CD8-positive, alpha-beta T cell (primary cell): ENCODE measurements at regions of chr9 and their contacts with region 1.

Region 1: DNA sequence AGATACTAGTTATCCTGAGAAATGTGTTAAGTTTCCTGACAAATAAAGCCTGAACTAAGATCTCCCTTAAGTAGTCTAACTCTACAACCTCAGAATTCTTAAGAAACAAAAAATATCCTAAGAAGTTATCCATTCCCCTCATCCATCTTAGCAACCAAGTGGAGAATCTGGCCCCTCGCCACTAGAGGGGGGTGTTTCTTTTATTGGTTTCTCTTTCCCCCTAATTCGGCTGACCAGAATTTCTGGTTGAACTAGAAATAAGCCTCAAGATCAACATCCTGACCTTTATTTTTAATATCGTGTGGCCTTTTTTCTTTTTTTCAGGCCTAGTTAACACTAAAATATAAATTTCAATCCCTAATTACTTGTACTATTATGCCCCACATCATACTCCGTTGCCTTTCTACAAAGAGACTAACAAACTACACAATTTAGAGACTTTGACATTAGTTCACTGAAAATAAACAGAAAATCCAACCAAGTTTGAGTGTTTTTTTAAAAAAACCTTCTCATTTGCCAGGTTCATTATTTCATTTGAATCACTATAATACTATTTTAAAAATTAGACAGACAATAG is 14.3 kb upstream of the NR4A3 start:
- DNase-seq: peak in 8 of 9 experiments; percentile 51 to 85 (median 74)
- ATAC-seq: peak; percentile 84
- H3K4me3 ChIP-seq: no peak overlapping the region
- H3K4me3 Mint-ChIP-seq: no peak overlapping the region
- H3K27ac ChIP-seq: no peak overlapping the region
- H3K27ac Mint-ChIP-seq: no peak overlapping the region
- H3K4me1 ChIP-seq: no peaks in the 10 kb centered on the region
- H3K4me1 Mint-ChIP-seq: peaks cover 13% of the 10 kb centered on the region
- H3K27me3 ChIP-seq: no peaks in the 10 kb centered on the region
- H3K27me3 Mint-ChIP-seq: peaks cover 4% of the 10 kb centered on the region
- CTCF ChIP-seq: peak; percentile 90

Region 2: DNA sequence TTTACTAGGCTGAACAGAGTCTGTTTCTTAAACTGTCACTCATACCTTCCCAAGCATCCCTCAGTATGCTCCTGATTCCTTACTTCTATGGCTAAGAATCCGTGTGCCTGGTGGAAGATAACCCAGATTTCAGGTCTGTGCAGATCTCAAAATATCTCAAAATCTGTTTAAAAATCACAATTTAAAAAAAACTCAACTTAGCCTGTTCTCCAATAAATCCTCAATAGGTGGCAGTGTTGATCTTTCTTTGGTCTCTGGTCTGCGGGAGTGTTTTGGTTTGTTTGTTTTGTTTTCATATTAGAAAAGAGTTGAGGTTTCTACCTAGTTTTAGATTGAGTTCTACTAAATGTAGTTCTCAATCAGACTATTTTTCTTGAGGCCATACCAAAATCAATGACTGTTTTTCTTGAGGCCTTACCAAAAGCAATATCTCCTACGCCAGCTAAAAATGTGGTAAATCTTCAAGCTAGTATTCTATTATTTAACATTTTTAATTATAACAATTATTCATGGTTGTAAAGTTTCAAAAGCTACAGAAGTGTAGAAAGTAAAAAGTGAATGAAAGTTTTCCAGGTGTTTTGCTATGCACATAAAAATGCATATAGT is 644.5 kb before region 1 on chr9:
- CTCF ChIA-PET with region 1: no interaction called
- POLR2A ChIA-PET with region 1: no interaction called
- intact Hi-C with region 1: loop called in 1 of 2 experiments (anchors 5 kb)
- DNase-seq: peak in 2 of 9 experiments; percentile 56 to 71
- ATAC-seq: no peak
- H3K4me3 ChIP-seq: no peak overlapping the region
- H3K4me3 Mint-ChIP-seq: no peak overlapping the region
- H3K27ac ChIP-seq: no peak overlapping the region
- H3K27ac Mint-ChIP-seq: no peak overlapping the region
- H3K4me1 ChIP-seq: peaks cover 14% of the 10 kb centered on the region
- H3K4me1 Mint-ChIP-seq: peaks cover 26% of the 10 kb centered on the region
- H3K27me3 ChIP-seq: no peaks in the 10 kb centered on the region
- H3K27me3 Mint-ChIP-seq: no peaks in the 10 kb centered on the region
- CTCF ChIP-seq: peak; percentile 86

Region 3: GRCh38 chr9:99266255-99267023 is 540.9 kb before region 1 on chr9:
- CTCF ChIA-PET with region 1: no interaction called
- POLR2A ChIA-PET with region 1: no interaction called
- intact Hi-C with region 1: loop called in 1 of 2 experiments (anchors 2 kb)
- DNase-seq: peak; percentile 12 to 73 (median 59)
- ATAC-seq: peak; percentile 58
- H3K4me3 ChIP-seq: peak overlapping the region in 1 of 2 experiments; percentile 18
- H3K4me3 Mint-ChIP-seq: peak overlapping the region; percentile 9
- H3K27ac ChIP-seq: no peak overlapping the region
- H3K27ac Mint-ChIP-seq: no peak overlapping the region
- H3K4me1 ChIP-seq: peaks cover 7% of the 10 kb centered on the region
- H3K4me1 Mint-ChIP-seq: peaks cover 9% of the 10 kb centered on the region
- H3K27me3 ChIP-seq: no peaks in the 10 kb centered on the region
- H3K27me3 Mint-ChIP-seq: peaks cover 2% of the 10 kb centered on the region
- CTCF ChIP-seq: peak; percentile 87

Region 4: GRCh38 chr9:99906403-99907207 is 99.2 kb after region 1 on chr9 and contains the start of gene STX17:
- CTCF ChIA-PET with region 1: interaction called, 3 read pairs
- POLR2A ChIA-PET with region 1: no interaction called
- intact Hi-C with region 1: loop called in 1 of 2 experiments (anchors 5 kb)
- DNase-seq: peak; percentile 64 to 92 (median 84)
- ATAC-seq: peak; percentile 85
- H3K4me3 ChIP-seq: peak within 1 kb of the TSS; percentile 95 to 96
- H3K4me3 Mint-ChIP-seq: peak within 1 kb of the TSS; percentile 97
- H3K27ac ChIP-seq: peak within 1 kb of the TSS; percentile 98 to 99
- H3K27ac Mint-ChIP-seq: peak within 1 kb of the TSS; percentile 100
- H3K4me1 ChIP-seq: peaks cover 20% of the 10 kb centered on the region
- H3K4me1 Mint-ChIP-seq: peaks cover 33% of the 10 kb centered on the region
- H3K27me3 ChIP-seq: no peaks in the 10 kb centered on the region
- H3K27me3 Mint-ChIP-seq: no peaks in the 10 kb centered on the region
- CTCF ChIP-seq: no peak
- total RNA-seq, gene STX17: 21.0 to 23.1 TPM

Region 5: GRCh38 chr9:100216178-100216787 is 408.9 kb after region 1 on chr9:
- CTCF ChIA-PET with region 1: no interaction called
- POLR2A ChIA-PET with region 1: no interaction called
- intact Hi-C with region 1: loop called (anchors 5 kb)
- DNase-seq: peak; percentile 27 to 75 (median 56)
- ATAC-seq: peak; percentile 51
- H3K4me3 ChIP-seq: no peak overlapping the region
- H3K4me3 Mint-ChIP-seq: no peak overlapping the region
- H3K27ac ChIP-seq: no peak overlapping the region
- H3K27ac Mint-ChIP-seq: no peak overlapping the region
- H3K4me1 ChIP-seq: no peaks in the 10 kb centered on the region
- H3K4me1 Mint-ChIP-seq: no peaks in the 10 kb centered on the region
- H3K27me3 ChIP-seq: no peaks in the 10 kb centered on the region
- H3K27me3 Mint-ChIP-seq: no peaks in the 10 kb centered on the region
- CTCF ChIP-seq: peak; percentile 66

Region 6: GRCh38 chr9:100437860-100438805 is 630.8 kb after region 1 on chr9:
- CTCF ChIA-PET with region 1: no interaction called
- POLR2A ChIA-PET with region 1: no interaction called
- intact Hi-C with region 1: loop called in 1 of 2 experiments (anchors 10 kb)
- DNase-seq: peak; percentile 33 to 77 (median 72)
- ATAC-seq: peak; percentile 80
- H3K4me3 ChIP-seq: no peak overlapping the region
- H3K4me3 Mint-ChIP-seq: no peak overlapping the region
- H3K27ac ChIP-seq: no peak overlapping the region
- H3K27ac Mint-ChIP-seq: no peak overlapping the region
- H3K4me1 ChIP-seq: no peaks in the 10 kb centered on the region
- H3K4me1 Mint-ChIP-seq: peaks cover 2% of the 10 kb centered on the region
- H3K27me3 ChIP-seq: no peaks in the 10 kb centered on the region
- H3K27me3 Mint-ChIP-seq: no peaks in the 10 kb centered on the region
- CTCF ChIP-seq: peak; percentile 90